ENCODE measurements at regions of chr16 and their contacts with region 1.

Region 1: DNA sequence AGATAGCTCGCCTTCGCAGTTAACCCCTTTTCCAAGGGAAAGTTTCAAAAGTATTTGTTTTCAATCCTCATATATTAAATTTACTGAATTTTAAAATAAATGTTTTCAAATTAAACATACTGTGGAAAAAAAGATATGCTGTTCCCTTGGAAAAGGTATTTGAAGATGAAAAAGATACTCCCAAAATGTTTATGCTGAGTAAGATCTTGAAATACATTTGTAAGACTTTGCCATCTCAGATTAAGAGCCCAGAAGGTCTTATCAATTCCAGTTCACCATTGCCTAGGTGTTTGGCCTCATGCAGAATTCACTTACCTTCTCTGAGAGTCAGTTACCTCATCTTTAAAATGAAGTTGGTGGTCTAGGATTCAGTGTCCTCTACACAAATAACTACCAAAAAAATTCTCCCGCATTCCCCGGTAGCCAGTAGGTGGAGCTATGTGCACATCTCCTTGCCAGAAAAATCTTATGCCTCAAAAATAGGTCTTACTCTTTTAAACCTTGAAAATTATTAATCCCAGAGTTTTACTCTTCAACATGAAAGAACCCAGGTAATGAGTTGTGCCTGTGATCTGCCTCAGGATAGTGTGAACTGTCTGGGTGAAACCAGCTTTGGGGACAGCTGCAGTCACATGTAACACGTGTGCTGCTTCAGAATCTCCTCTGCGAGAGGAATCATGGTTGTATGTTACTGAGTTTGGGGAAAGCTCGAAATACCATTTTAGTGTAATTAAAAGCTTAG is 178.3 kb downstream of the MRTFB start:
- DNase-seq: peak; percentile 54
- H3K4me3 Mint-ChIP-seq: no peak overlapping the region
- H3K27ac Mint-ChIP-seq: no peak overlapping the region
- H3K4me1 Mint-ChIP-seq: no peaks in the 10 kb centered on the region
- H3K27me3 Mint-ChIP-seq: no peaks in the 10 kb centered on the region
- CTCF ChIP-seq: peak; percentile 77

Region 2: GRCh38 chr16:14132696-14133048 is 116.8 kb before region 1 on chr16:
- CTCF ChIA-PET with region 1: no interaction called
- POLR2A ChIA-PET with region 1: no interaction called
- intact Hi-C with region 1: no loop called
- DNase-seq: no peak
- H3K4me3 Mint-ChIP-seq: no peak overlapping the region
- H3K27ac Mint-ChIP-seq: no peak overlapping the region
- H3K4me1 Mint-ChIP-seq: no peaks in the 10 kb centered on the region
- H3K27me3 Mint-ChIP-seq: no peaks in the 10 kb centered on the region
- CTCF ChIP-seq: no peak

Region 3: GRCh38 chr16:14263011-14263410 is 13.5 kb after region 1 on chr16:
- CTCF ChIA-PET with region 1: interaction called, 23 read pairs
- POLR2A ChIA-PET with region 1: interaction called, 5 read pairs
- intact Hi-C with region 1: no loop called
- DNase-seq: no peak
- H3K4me3 Mint-ChIP-seq: no peak overlapping the region
- H3K27ac Mint-ChIP-seq: no peak overlapping the region
- H3K4me1 Mint-ChIP-seq: no peaks in the 10 kb centered on the region
- H3K27me3 Mint-ChIP-seq: no peaks in the 10 kb centered on the region
- CTCF ChIP-seq: no peak

Region 4: GRCh38 chr16:14285513-14286385 is 36.3 kb after region 1 on chr16:
- CTCF ChIA-PET with region 1: interaction called, 8 read pairs
- POLR2A ChIA-PET with region 1: no interaction called
- intact Hi-C with region 1: loop called (anchors 1 kb)
- DNase-seq: peak; percentile 92
- H3K4me3 Mint-ChIP-seq: peak overlapping the region; percentile 82
- H3K27ac Mint-ChIP-seq: peak overlapping the region; percentile 23
- H3K4me1 Mint-ChIP-seq: peaks cover 5% of the 10 kb centered on the region
- H3K27me3 Mint-ChIP-seq: no peaks in the 10 kb centered on the region
- CTCF ChIP-seq: no peak

Region 5: DNA sequence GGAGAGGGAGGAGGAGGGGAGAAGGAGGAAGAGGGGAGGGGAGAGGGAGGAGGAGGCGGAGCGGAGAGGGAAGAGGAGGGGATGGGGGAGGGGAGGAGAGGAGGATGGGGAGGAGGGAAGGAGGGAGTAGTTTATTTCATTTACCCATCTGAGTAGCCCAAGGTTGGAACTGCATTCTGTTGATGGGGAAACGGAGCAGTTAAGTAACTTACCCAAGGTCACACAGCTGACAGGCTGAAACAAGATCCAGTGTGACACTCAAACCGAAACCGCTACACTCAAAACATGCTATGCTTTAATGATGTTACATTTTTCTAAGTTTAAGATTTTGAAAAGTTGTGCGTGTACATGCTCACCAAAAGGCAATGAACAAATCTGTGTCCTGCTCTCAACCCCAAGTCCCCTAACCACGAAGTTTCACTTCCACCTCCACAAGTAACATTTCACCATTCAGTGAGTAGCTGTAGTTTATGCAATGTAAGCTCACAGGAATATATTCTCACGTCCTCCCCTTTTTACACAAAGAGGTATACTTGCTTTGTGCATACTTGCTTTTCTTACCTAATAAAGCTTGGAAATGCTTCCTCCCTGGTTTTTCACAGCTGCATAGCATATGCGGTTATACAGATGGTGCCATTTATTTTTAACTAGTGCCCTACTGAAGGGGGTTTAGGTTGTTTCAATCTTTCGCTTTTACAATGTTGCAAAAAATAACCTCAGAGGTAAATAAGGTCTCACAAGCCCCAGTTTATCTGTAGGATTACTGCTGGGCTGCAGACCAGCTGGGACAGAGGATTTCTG is 105.3 kb after region 1 on chr16:
- CTCF ChIA-PET with region 1: no interaction called
- POLR2A ChIA-PET with region 1: no interaction called
- intact Hi-C with region 1: no loop called
- DNase-seq: no peak
- H3K4me3 Mint-ChIP-seq: no peak overlapping the region
- H3K27ac Mint-ChIP-seq: no peak overlapping the region
- H3K4me1 Mint-ChIP-seq: peaks cover 21% of the 10 kb centered on the region
- H3K27me3 Mint-ChIP-seq: no peaks in the 10 kb centered on the region
- CTCF ChIP-seq: no peak

Region 6: GRCh38 chr16:14475370-14476139 is 226.1 kb after region 1 on chr16:
- CTCF ChIA-PET with region 1: no interaction called
- POLR2A ChIA-PET with region 1: no interaction called
- intact Hi-C with region 1: no loop called
- DNase-seq: peak; percentile 36
- H3K4me3 Mint-ChIP-seq: no peak overlapping the region
- H3K27ac Mint-ChIP-seq: peak overlapping the region; percentile 8
- H3K4me1 Mint-ChIP-seq: peaks cover 13% of the 10 kb centered on the region
- H3K27me3 Mint-ChIP-seq: no peaks in the 10 kb centered on the region
- CTCF ChIP-seq: no peak